K562 (cell line): ENCODE measurements at regions of chr12 and their contacts with region 1.

Region 1: GRCh38 chr12:104456417-104456949 is at the start of gene CHST11:
- DNase-seq: peak; percentile 93 to 97 (median 94)
- ATAC-seq: peak; percentile 89
- H3K4me3 ChIP-seq: peak within 1 kb of the TSS; percentile 97
- H3K27ac ChIP-seq: peak within 1 kb of the TSS; percentile 81
- H3K4me1 ChIP-seq: peaks cover 28 to 37% of the 10 kb centered on the region in 2 experiments
- H3K27me3 ChIP-seq: no peaks in the 10 kb centered on the region
- CTCF ChIP-seq: peak; percentile 35 to 53 (median 38); a peak in 4 of 6 replicates
- EP300 ChIP-seq: peak; percentile 18; the same call in 1 of the 2 replicates
- POLR2A ChIP-seq: peak; percentile 39; the same call in 1 of the 2 replicates
- RAD21 ChIP-seq: peak; percentile 54 to 59
- polyA plus RNA-seq, gene CHST11: 2.3 to 2.9 TPM

Region 2: GRCh38 chr12:104473374-104473983 is 17.0 kb after region 1 on chr12:
- CTCF ChIA-PET with region 1: no interaction called
- POLR2A ChIA-PET with region 1: interaction called, 19 read pairs
- in situ Hi-C with region 1: no loop called
- intact Hi-C with region 1: no loop called
- DNase-seq: no peak
- ATAC-seq: peak; percentile 44
- H3K4me3 ChIP-seq: no peak overlapping the region
- H3K27ac ChIP-seq: no peak overlapping the region
- H3K4me1 ChIP-seq: peaks cover under 1 to 35% of the 10 kb centered on the region in 2 experiments
- H3K27me3 ChIP-seq: no peaks in the 10 kb centered on the region
- CTCF ChIP-seq: no peak
- EP300 ChIP-seq: no peak
- POLR2A ChIP-seq: no peak
- RAD21 ChIP-seq: no peak

Region 3: GRCh38 chr12:104494137-104494792 is 37.8 kb after region 1 on chr12:
- CTCF ChIA-PET with region 1: no interaction called
- POLR2A ChIA-PET with region 1: no interaction called
- in situ Hi-C with region 1: no loop called
- intact Hi-C with region 1: loop called (anchors 2 kb)
- DNase-seq: peak; percentile 50 to 84 (median 56)
- ATAC-seq: peak; percentile 95
- H3K4me3 ChIP-seq: no peak overlapping the region
- H3K27ac ChIP-seq: peak overlapping the region; percentile 69
- H3K4me1 ChIP-seq: peaks cover 8 to 59% of the 10 kb centered on the region in 2 experiments; a peak in 4 of 5 replicates
- H3K27me3 ChIP-seq: no peaks in the 10 kb centered on the region
- CTCF ChIP-seq: no peak
- EP300 ChIP-seq: no peak
- POLR2A ChIP-seq: no peak
- RAD21 ChIP-seq: no peak; a peak in 3 of 4 replicates

Region 4: GRCh38 chr12:104578453-104578852 is 122.0 kb after region 1 on chr12:
- CTCF ChIA-PET with region 1: no interaction called
- POLR2A ChIA-PET with region 1: no interaction called
- in situ Hi-C with region 1: no loop called
- intact Hi-C with region 1: loop called (anchors 5 kb)
- DNase-seq: peak in 3 of 4 experiments; percentile 28 to 70 (median 46)
- ATAC-seq: peak; percentile 31
- H3K4me3 ChIP-seq: no peak overlapping the region
- H3K27ac ChIP-seq: peak overlapping the region; percentile 65
- H3K4me1 ChIP-seq: peaks cover 11 to 51% of the 10 kb centered on the region in 2 experiments
- H3K27me3 ChIP-seq: no peaks in the 10 kb centered on the region
- CTCF ChIP-seq: no peak
- EP300 ChIP-seq: no peak
- POLR2A ChIP-seq: no peak
- RAD21 ChIP-seq: no peak

Region 5: DNA sequence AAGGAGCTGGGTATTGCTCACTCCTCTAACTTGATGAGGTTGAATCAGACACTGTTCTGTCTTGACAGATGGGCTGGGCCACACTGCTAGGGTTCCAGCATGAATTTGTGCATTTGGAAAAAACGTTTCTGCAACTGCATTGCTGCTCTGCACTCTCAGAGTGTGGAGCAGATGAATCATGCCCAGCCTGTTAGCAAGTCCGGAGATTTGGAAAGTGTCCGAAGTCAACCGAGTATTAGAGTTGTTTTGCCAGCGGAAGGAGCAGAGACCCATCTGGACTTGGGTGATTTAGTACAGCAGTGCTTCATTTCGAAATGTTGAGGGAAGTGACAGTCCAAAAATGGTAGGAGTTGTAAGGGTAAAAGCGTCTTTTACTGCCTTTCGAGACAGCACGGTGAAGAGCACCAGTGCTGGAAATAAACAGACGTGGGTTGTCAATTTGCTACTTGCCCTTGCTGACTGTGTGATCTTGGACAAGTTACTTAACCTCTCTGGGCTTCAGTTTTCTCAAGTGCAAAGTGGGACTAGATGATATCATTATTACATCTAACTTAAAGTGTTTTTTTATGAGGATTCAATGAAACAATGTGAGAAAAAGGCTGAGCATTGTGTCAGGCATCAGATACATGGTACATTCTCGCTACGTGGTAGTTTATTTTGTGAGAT is 139.8 kb after region 1 on chr12:
- CTCF ChIA-PET with region 1: interaction called, 3 read pairs
- POLR2A ChIA-PET with region 1: interaction called, 5 read pairs
- in situ Hi-C with region 1: no loop called
- intact Hi-C with region 1: loop called (anchors 2 kb)
- DNase-seq: no peak
- ATAC-seq: no peak
- H3K4me3 ChIP-seq: no peak overlapping the region
- H3K27ac ChIP-seq: no peak overlapping the region
- H3K4me1 ChIP-seq: peaks cover 22 to 69% of the 10 kb centered on the region in 2 experiments
- H3K27me3 ChIP-seq: no peaks in the 10 kb centered on the region
- CTCF ChIP-seq: no peak
- EP300 ChIP-seq: no peak
- POLR2A ChIP-seq: no peak
- RAD21 ChIP-seq: no peak

Region 6: DNA sequence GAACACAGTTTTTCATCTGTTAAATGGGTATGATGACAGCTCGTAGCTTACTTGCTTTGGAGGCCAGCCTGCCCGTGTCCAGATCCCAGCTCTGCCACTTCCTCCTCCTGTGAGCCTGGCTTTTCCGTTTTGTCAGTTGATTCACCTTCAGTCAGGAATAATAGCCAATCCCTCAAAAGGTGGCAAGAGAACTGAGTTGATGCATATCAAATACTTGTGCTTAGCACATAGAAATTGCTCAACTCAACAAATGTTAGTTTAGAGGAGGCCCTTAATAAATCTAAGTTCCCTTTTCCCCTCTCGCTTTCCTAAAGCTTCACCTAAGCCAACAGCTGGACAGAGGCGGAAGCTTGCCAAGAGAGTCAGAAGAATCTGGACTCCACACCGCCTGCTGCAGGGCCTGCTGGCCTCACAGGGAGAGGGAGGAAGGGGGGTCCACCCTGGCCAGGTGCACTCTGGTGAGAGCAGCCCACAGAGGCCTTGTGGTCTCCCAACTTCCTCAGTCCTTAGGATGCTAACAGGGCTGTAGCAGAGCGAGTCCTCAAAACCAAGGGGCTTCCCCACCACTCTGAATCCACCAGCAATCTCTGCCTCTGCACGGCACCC is 213.4 kb after region 1 on chr12:
- CTCF ChIA-PET with region 1: interaction called, 3 read pairs
- POLR2A ChIA-PET with region 1: interaction called, 3 read pairs
- in situ Hi-C with region 1: no loop called
- intact Hi-C with region 1: loop called (anchors 5 kb)
- DNase-seq: no peak
- ATAC-seq: no peak
- H3K4me3 ChIP-seq: no peak overlapping the region
- H3K27ac ChIP-seq: no peak overlapping the region
- H3K4me1 ChIP-seq: peaks cover 30 to 41% of the 10 kb centered on the region in 2 experiments; a peak in 4 of 5 replicates
- H3K27me3 ChIP-seq: no peaks in the 10 kb centered on the region
- CTCF ChIP-seq: no peak
- EP300 ChIP-seq: no peak
- POLR2A ChIP-seq: no peak
- RAD21 ChIP-seq: no peak

Region 7: DNA sequence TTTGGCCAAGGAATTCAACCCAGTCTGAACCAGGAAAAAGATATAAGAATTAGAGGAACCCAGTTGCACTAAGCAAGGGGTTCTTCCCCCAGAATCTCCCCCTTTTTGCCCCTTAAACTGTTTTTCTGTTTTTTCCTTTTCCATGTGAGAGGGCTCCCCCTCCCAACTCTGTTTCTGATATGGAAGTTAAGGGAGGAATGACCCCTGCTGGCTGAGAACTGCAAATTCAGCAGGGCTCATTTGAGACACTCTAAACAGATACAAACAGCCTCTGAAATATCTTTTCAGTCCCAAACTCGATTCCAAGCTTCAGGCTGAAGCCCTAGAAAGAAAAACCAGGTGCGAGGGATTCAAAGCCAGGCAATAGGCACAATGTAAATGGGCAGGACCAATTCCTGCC is 368.9 kb after region 1 on chr12:
- CTCF ChIA-PET with region 1: no interaction called
- POLR2A ChIA-PET with region 1: no interaction called
- in situ Hi-C with region 1: no loop called
- intact Hi-C with region 1: loop called (anchors 10 kb)
- DNase-seq: peak; percentile 25 to 69 (median 32)
- ATAC-seq: peak; percentile 82
- H3K4me3 ChIP-seq: no peak overlapping the region
- H3K27ac ChIP-seq: no peak overlapping the region
- H3K4me1 ChIP-seq: peaks cover 4 to 6% of the 10 kb centered on the region in 2 experiments; a peak in 4 of 5 replicates
- H3K27me3 ChIP-seq: no peaks in the 10 kb centered on the region
- CTCF ChIP-seq: peak; percentile 70 to 79 (median 77)
- EP300 ChIP-seq: no peak
- POLR2A ChIP-seq: no peak
- RAD21 ChIP-seq: peak; percentile 53 to 88